ENCODE measurements at regions of chr11 and their contacts with region 1.

Region 1: GRCh38 chr11:8192016-8192895 is 23.4 kb upstream of the RIC3 start:
- H3K4me3 Mint-ChIP-seq: no peak overlapping the region
- H3K27ac Mint-ChIP-seq: no peak overlapping the region
- H3K4me1 Mint-ChIP-seq: peaks cover 35% of the 10 kb centered on the region
- H3K27me3 Mint-ChIP-seq: peaks cover 1% of the 10 kb centered on the region

Region 2: GRCh38 chr11:8209208-8209807 is 17.1 kb after region 1 on chr11:
- intact Hi-C with region 1: loop called (anchors 1 kb)
- H3K4me3 Mint-ChIP-seq: no peak overlapping the region
- H3K27ac Mint-ChIP-seq: peak overlapping the region; percentile 91
- H3K4me1 Mint-ChIP-seq: peaks cover 61% of the 10 kb centered on the region
- H3K27me3 Mint-ChIP-seq: peaks cover 2% of the 10 kb centered on the region

Region 3: GRCh38 chr11:8283465-8284230 is 91.4 kb after region 1 on chr11:
- intact Hi-C with region 1: no loop called
- H3K4me3 Mint-ChIP-seq: no peak overlapping the region
- H3K27ac Mint-ChIP-seq: no peak overlapping the region
- H3K4me1 Mint-ChIP-seq: peaks cover 13% of the 10 kb centered on the region
- H3K27me3 Mint-ChIP-seq: peaks cover 15% of the 10 kb centered on the region

Region 4: DNA sequence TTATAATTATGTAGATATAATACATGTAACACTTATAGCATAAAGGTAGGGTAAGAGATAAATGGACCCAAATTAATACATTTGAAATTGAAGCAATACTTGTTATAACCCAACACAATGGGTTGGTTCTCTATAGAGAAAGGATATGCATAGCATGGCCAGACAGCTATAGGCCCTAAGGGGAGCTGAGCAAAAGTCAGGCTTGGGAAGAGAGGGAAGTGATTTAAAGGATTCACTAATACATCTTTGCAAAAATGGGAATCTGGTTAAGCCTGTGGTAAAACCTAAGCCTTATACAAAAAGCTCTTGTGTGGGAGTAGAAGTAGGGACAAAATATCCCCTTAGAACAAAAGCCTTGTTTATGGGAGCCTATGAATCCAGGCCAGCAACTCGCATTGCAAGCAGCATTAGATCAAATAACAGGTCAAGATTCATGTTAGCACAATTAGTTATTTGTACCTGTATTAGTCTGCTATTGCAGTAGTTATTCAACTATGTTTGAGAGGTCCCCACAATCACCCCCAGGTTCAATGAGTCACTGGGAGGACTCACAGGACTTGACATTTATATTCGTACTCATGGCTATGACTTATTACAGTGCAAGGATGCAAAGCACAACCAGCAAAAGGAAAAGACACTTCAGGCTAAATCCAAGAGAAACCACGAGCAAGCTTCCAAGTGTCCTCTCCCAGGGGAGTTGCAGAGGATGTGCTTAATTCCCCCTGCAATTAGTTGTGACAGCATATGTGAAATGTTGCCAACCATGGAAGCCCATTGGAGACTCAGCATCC is 216.1 kb after region 1 on chr11:
- intact Hi-C with region 1: no loop called
- H3K4me3 Mint-ChIP-seq: no peak overlapping the region
- H3K27ac Mint-ChIP-seq: no peak overlapping the region
- H3K4me1 Mint-ChIP-seq: no peaks in the 10 kb centered on the region
- H3K27me3 Mint-ChIP-seq: no peaks in the 10 kb centered on the region

Measured in dendritic cell treated with granulocyte-macrophage colony-stimulating factor and Interleukin-4, amounts not matched to agents 40 ng/mL and 50 ng/mL, for 4 days (primary cell).